ENCODE measurements at regions of chr18 and their contacts with region 1.

Region 1: DNA sequence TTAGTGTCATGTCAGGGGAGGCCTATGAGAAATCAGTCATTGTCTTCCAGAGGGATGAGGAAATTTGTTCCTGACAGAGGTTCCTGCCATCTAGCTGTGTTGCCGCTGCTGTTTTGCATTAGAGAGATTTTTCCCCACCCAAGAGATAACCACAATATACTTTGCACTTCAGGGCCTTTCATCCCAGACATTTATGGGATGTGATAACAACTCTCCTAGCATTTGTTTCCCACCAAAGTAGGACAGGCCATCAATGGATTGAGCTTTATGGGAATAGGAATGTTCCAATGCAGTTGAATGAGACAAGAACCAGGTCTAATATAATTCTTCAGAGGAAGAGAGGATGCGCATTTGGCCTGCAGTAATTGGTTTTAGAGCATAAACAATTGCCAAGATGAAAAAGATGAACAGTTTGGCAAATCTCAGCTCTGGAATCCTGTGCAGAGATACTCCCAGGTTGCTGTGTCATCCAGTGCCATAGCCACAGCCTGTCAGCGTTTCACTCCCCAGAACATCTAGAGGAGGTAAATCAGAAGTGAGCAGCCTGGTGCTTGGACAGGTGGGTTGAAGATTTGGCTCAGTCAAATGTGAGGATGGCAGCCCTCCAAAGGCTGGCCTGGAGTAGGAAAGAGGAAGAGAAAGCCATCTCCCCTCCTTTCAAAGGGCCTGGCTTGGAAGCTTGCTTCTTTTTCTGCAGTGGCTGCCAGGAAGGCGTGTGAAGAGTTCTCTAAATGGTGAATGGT is 93.7 kb upstream of the SETBP1 start:
- DNase-seq: peak; percentile 77
- H3K4me3 ChIP-seq: no peak overlapping the region
- H3K27ac ChIP-seq: peak overlapping the region; percentile 31 to 73 (median 54)
- H3K4me1 ChIP-seq: peaks cover 0 to 48% (median 44%) of the 10 kb centered on the region in 4 donors
- H3K27me3 ChIP-seq: no peaks in the 10 kb centered on the region
- CTCF ChIP-seq: no peak
- EP300 ChIP-seq: peak in 2 of 4 donors; percentile 5 to 46
- POLR2A ChIP-seq: no peak

Region 2: GRCh38 chr18:44495151-44495550 is 91.8 kb before region 1 on chr18:
- intact Hi-C with region 1: loop called (anchors 2 kb)
- DNase-seq: no peak
- H3K4me3 ChIP-seq: no peak overlapping the region
- H3K27ac ChIP-seq: no peak overlapping the region
- H3K4me1 ChIP-seq: peaks cover 0 to 33% (median 25%) of the 10 kb centered on the region in 4 donors
- H3K27me3 ChIP-seq: no peaks in the 10 kb centered on the region
- CTCF ChIP-seq: no peak
- EP300 ChIP-seq: no peak
- POLR2A ChIP-seq: no peak

Region 3: GRCh38 chr18:44715245-44715644 is 128.3 kb after region 1 on chr18:
- intact Hi-C with region 1: no loop called
- DNase-seq: peak; percentile 93
- H3K4me3 ChIP-seq: peak overlapping the region in 1 of 4 donors; percentile 6
- H3K27ac ChIP-seq: peak overlapping the region; percentile 83 to 88 (median 84)
- H3K4me1 ChIP-seq: peaks cover 0 to 76% (median 59%) of the 10 kb centered on the region in 4 donors
- H3K27me3 ChIP-seq: no peaks in the 10 kb centered on the region
- CTCF ChIP-seq: no peak
- EP300 ChIP-seq: peak; percentile 56 to 85 (median 82)
- POLR2A ChIP-seq: peak in 1 of 2 donors; percentile 23